CD8-positive, alpha-beta T cell (primary cell): ENCODE measurements at regions of chr20 and their contacts with region 1.

Region 1: GRCh38 chr20:1466211-1467081 is at the start of gene NSFL1C:
- DNase-seq: peak; percentile 96 to 99 (median 97)
- ATAC-seq: peak; percentile 97
- H3K4me3 ChIP-seq: peak within 1 kb of the TSS; percentile 67 to 76
- H3K4me3 Mint-ChIP-seq: peak within 1 kb of the TSS; percentile 87
- H3K27ac ChIP-seq: peak within 1 kb of the TSS; percentile 67 to 73
- H3K27ac Mint-ChIP-seq: peak within 1 kb of the TSS; percentile 87
- H3K4me1 ChIP-seq: peaks cover 31% of the 10 kb centered on the region
- H3K4me1 Mint-ChIP-seq: peaks cover 52% of the 10 kb centered on the region
- H3K27me3 ChIP-seq: no peaks in the 10 kb centered on the region
- H3K27me3 Mint-ChIP-seq: peaks cover 2% of the 10 kb centered on the region
- CTCF ChIP-seq: peak; percentile 100
- total RNA-seq, gene NSFL1C: 66.0 to 70.5 TPM

Region 2: DNA sequence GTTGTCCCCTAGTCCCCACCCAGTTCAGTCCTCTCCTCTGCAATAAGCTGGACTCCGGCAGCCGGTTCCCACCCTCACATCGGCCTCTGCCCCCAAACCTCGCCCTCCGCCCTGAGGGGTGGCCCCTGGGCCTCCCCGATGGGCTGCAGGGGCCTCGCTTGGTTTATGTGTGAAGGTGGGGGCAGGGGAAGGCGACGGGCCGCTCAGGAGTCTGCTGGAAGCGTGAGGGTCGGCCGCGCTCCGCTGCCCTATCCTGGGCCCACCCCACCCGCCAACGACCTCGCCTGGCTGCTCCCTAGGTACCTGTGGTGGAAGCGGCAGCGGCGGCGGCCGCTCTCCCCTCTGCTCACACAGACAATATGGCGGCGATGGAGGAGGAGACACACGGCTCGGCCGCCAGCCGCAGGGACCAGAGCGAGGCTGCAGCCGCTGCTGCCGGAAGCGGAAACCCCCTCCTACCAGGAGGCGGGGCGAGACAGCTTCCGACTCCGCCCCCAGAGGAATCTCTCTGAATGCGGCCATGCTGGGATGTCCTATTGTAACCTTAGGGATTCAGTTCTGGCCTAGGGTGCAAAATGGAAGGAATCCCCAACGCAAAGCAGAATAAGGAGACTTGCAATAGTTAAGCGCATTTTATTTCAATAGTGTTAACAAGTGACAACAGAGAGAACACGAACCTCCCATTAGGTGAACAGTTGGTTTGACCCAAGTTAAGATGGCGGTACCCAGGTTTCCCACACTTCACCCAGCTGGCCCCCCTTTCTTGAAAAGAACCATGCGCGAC is 922.9 kb before region 1 on chr20 and contains the start of gene CSNK2A1:
- CTCF ChIA-PET with region 1: no interaction called
- POLR2A ChIA-PET with region 1: no interaction called
- intact Hi-C with region 1: loop called (anchors 5 to 10 kb)
- DNase-seq: peak; percentile 95 to 99 (median 96)
- ATAC-seq: peak; percentile 90
- H3K4me3 ChIP-seq: peak within 1 kb of the TSS; percentile 36 to 98
- H3K4me3 Mint-ChIP-seq: peak within 1 kb of the TSS; percentile 96
- H3K27ac ChIP-seq: peak within 1 kb of the TSS; percentile 74 to 92
- H3K27ac Mint-ChIP-seq: peak within 1 kb of the TSS; percentile 100
- H3K4me1 ChIP-seq: peaks cover 27% of the 10 kb centered on the region
- H3K4me1 Mint-ChIP-seq: peaks cover 55% of the 10 kb centered on the region
- H3K27me3 ChIP-seq: no peaks in the 10 kb centered on the region
- H3K27me3 Mint-ChIP-seq: no peaks in the 10 kb centered on the region
- CTCF ChIP-seq: no peak
- total RNA-seq, gene CSNK2A1: 63.6 to 66.0 TPM

Region 3: GRCh38 chr20:1225783-1226654 is 240.4 kb before region 1 on chr20 and contains the start of gene RAD21L1:
- CTCF ChIA-PET with region 1: no interaction called
- POLR2A ChIA-PET with region 1: interaction called, 3 read pairs
- intact Hi-C with region 1: loop called in 1 of 2 experiments (anchors 2 kb)
- DNase-seq: peak; percentile 63 to 85 (median 80)
- ATAC-seq: peak; percentile 93
- H3K4me3 ChIP-seq: peak within 1 kb of the TSS; percentile 64 to 82
- H3K4me3 Mint-ChIP-seq: peak within 1 kb of the TSS; percentile 87
- H3K27ac ChIP-seq: peak within 1 kb of the TSS in 1 of 2 experiments; percentile 44
- H3K27ac Mint-ChIP-seq: no peak within 1 kb of the TSS
- H3K4me1 ChIP-seq: peaks cover 9% of the 10 kb centered on the region
- H3K4me1 Mint-ChIP-seq: peaks cover 18% of the 10 kb centered on the region
- H3K27me3 ChIP-seq: peaks cover 0 to 8% of the 10 kb centered on the region in 2 experiments
- H3K27me3 Mint-ChIP-seq: peaks cover 13% of the 10 kb centered on the region
- CTCF ChIP-seq: no peak
- total RNA-seq, gene RAD21L1: not detected

Region 4: DNA sequence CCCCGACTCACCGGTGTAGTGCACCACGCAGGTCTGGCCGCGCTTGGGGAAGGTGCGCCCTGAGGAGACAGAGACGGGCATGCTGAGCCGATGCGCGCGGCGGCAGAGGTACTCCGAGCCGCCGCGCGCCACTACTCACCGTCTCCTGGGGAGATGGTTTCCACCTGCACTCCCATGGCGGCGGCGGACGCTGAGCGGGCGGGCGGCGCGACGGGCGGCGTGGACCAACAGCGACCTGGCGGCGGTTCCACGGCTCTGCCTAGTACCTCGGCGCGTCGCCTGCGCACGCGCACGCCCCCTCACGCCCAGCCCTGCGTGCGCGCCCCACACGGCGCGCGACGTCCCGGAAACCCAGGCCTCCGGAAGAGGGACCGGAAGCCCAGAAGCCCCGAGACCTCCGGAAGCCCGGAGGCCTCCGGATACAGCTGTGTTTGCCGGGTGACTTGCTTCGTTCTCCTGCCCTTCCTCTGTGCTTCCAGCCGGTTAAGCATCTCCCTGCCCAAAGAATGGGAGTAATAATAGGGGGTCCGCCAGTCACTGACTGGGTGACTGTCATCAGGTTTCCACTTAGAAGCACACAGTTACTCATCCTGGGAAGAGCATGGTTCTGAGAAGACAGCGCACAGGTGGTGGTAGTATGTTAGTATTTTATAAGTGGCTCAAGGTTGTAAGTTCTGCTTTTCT is 73.5 kb before region 1 on chr20 and contains the start of gene FKBP1A:
- CTCF ChIA-PET with region 1: no interaction called
- POLR2A ChIA-PET with region 1: interaction called, 6 read pairs
- intact Hi-C with region 1: loop called in 1 of 2 experiments (anchors 1 kb)
- DNase-seq: peak; percentile 85 to 97 (median 92)
- ATAC-seq: peak; percentile 84
- H3K4me3 ChIP-seq: peak within 1 kb of the TSS; percentile 62 to 73
- H3K4me3 Mint-ChIP-seq: peak within 1 kb of the TSS; percentile 94
- H3K27ac ChIP-seq: peak within 1 kb of the TSS; percentile 58 to 68
- H3K27ac Mint-ChIP-seq: peak within 1 kb of the TSS; percentile 96
- H3K4me1 ChIP-seq: peaks cover 47% of the 10 kb centered on the region
- H3K4me1 Mint-ChIP-seq: peaks cover 53% of the 10 kb centered on the region
- H3K27me3 ChIP-seq: no peaks in the 10 kb centered on the region
- H3K27me3 Mint-ChIP-seq: no peaks in the 10 kb centered on the region
- CTCF ChIP-seq: no peak
- total RNA-seq, gene FKBP1A: 34.0 to 36.8 TPM

Region 5: DNA sequence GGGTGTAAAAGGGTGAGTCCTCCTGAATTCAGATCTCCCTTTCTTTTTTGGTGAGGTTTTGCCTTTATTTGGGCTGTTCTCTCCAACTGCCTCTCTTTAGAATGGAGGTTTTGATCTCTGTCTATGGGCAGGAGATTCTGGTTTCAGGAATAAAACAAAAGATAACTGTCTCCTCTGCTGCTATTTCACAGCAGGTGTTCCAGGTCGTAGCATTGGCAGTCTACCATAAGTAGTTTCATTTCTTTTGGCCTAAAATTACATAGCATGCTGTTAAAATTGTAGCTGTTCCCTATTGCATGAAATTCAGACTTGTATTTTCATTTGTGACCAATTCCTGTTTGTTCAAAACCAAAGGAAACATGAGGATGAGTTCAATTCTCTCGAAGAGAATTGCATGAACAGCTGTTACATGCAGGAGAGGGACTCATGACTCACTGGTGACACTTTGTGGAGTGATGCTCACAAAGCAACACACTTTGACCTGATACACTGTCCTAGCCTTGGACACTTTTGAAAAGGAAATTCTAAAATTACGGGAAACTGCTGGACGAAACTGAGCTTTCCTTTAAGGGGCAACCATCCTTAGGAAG is 267.9 kb after region 1 on chr20:
- CTCF ChIA-PET with region 1: interaction called, 7 read pairs
- POLR2A ChIA-PET with region 1: no interaction called
- intact Hi-C with region 1: loop called in 1 of 2 experiments (anchors 1 kb)
- DNase-seq: peak in 6 of 9 experiments; percentile 7 to 74 (median 36)
- ATAC-seq: peak; percentile 63
- H3K4me3 ChIP-seq: no peak overlapping the region
- H3K4me3 Mint-ChIP-seq: no peak overlapping the region
- H3K27ac ChIP-seq: no peak overlapping the region
- H3K27ac Mint-ChIP-seq: peak overlapping the region; percentile 75
- H3K4me1 ChIP-seq: peaks cover 31% of the 10 kb centered on the region
- H3K4me1 Mint-ChIP-seq: peaks cover 4% of the 10 kb centered on the region
- H3K27me3 ChIP-seq: no peaks in the 10 kb centered on the region
- H3K27me3 Mint-ChIP-seq: no peaks in the 10 kb centered on the region
- CTCF ChIP-seq: peak; percentile 50

Region 6: GRCh38 chr20:2470423-2471193 is 1004.2 kb after region 1 on chr20 and contains the start of gene SNRPB:
- CTCF ChIA-PET with region 1: no interaction called
- POLR2A ChIA-PET with region 1: no interaction called
- intact Hi-C with region 1: loop called in 1 of 2 experiments (anchors 10 kb)
- DNase-seq: peak; percentile 93 to 99 (median 97)
- ATAC-seq: peak; percentile 93
- H3K4me3 ChIP-seq: peak within 1 kb of the TSS; percentile 76 to 99
- H3K4me3 Mint-ChIP-seq: peak within 1 kb of the TSS; percentile 99
- H3K27ac ChIP-seq: peak within 1 kb of the TSS; percentile 95 to 99
- H3K27ac Mint-ChIP-seq: peak within 1 kb of the TSS; percentile 98
- H3K4me1 ChIP-seq: peaks cover 21% of the 10 kb centered on the region
- H3K4me1 Mint-ChIP-seq: peaks cover 44% of the 10 kb centered on the region
- H3K27me3 ChIP-seq: no peaks in the 10 kb centered on the region
- H3K27me3 Mint-ChIP-seq: no peaks in the 10 kb centered on the region
- CTCF ChIP-seq: no peak
- total RNA-seq, gene SNRPB: 176 to 180 TPM